Activated CD8-positive, alpha-beta T cell treated with anti-CD3 and anti-CD28 coated beads for 36 hours (primary cell): ENCODE measurements at regions of chr16 and their contacts with region 1.

Region 1: DNA sequence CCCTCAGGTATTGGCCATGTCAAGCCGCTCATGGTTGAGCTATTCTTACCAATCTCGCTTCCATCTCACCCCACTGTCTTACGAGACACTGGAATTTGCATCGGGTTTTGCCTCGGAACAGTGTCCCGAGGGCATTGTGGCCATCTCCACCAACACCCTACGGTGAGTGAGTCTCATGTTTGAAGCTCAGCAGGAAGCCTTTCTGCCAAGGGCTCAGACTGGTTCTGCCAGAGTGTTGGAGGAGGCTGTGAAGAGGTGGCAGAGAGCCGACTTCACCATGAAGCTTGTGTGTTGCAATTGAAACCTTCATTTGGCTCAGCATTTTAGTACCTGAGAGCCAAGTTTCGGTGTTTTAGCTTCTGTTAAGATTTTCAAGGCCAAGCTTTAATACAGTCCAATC is 38.0 kb downstream of the SF3B3 start:
- DNase-seq: no peak
- ATAC-seq: no peak
- H3K4me3 Mint-ChIP-seq: no peak overlapping the region
- H3K27ac Mint-ChIP-seq: peak overlapping the region; percentile 20
- H3K4me1 Mint-ChIP-seq: peaks cover 4% of the 10 kb centered on the region
- H3K27me3 Mint-ChIP-seq: no peaks in the 10 kb centered on the region
- CTCF ChIP-seq: no peak

Region 2: GRCh38 chr16:70573451-70574121 is 12.0 kb after region 1 on chr16:
- CTCF ChIA-PET with region 1: no interaction called
- POLR2A ChIA-PET with region 1: interaction called, 13 read pairs
- intact Hi-C with region 1: no loop called
- DNase-seq: no peak
- ATAC-seq: no peak
- H3K4me3 Mint-ChIP-seq: no peak overlapping the region
- H3K27ac Mint-ChIP-seq: peak overlapping the region; percentile 63
- H3K4me1 Mint-ChIP-seq: peaks cover 33% of the 10 kb centered on the region
- H3K27me3 Mint-ChIP-seq: no peaks in the 10 kb centered on the region
- CTCF ChIP-seq: no peak

Region 3: DNA sequence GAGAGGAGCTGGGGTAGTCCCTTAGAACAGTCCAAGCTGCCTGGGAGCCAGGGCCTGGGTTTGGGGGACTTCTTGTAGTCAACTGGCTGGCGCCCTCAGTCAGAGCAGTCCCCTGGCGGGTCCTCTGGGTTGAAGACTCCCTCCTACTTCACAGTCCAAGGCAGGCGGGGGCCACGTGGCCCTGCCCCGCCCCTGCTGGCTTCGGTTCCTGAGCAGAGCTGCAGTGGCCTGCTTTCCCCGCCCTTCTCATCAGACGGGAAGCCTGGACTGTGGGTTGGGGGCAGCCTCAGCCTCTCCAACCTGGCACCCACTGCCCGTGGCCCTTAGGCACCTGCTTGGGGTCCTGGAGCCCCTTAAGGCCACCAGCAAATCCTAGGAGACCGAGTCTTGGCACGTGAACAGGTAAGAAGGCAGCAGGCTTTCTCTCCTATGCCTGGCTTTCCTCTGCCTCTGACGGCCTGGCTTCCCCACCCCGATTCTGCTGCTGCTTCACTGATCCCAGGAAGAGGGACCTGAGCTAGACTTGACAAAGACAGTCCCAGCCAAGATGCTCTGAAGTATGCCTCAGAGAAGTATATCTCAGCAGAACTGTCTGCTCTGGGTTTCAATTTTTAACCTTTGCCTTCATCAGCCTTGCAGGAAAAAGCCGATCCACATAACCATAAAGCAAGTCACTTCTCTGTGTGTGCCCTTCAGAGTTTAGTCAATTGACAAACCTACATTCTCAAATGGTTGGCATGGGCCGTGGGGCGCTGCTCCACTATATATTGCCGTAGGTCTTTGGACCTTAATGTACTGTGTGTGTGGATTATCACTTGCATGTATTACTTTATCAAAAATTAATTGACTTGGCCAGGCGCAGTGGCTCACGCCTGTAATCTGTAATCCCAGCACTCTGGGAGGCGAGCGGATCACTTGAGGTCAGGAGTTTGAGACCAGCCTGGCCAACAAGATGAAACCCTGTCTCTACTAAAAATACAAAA is 18.3 kb after region 1 on chr16:
- CTCF ChIA-PET with region 1: no interaction called
- POLR2A ChIA-PET with region 1: interaction called, 12 read pairs
- intact Hi-C with region 1: no loop called
- DNase-seq: no peak
- ATAC-seq: no peak
- H3K4me3 Mint-ChIP-seq: no peak overlapping the region
- H3K27ac Mint-ChIP-seq: no peak overlapping the region
- H3K4me1 Mint-ChIP-seq: peaks cover 13% of the 10 kb centered on the region
- H3K27me3 Mint-ChIP-seq: no peaks in the 10 kb centered on the region
- CTCF ChIP-seq: no peak

Region 4: GRCh38 chr16:70610273-70611223 is 48.9 kb after region 1 on chr16:
- CTCF ChIA-PET with region 1: no interaction called
- POLR2A ChIA-PET with region 1: no interaction called
- intact Hi-C with region 1: no loop called
- DNase-seq: no peak
- ATAC-seq: no peak
- H3K4me3 Mint-ChIP-seq: no peak overlapping the region
- H3K27ac Mint-ChIP-seq: no peak overlapping the region
- H3K4me1 Mint-ChIP-seq: no peaks in the 10 kb centered on the region
- H3K27me3 Mint-ChIP-seq: no peaks in the 10 kb centered on the region
- CTCF ChIP-seq: no peak